ENCODE measurements at regions of chr12 and their contacts with region 1.

Region 1: DNA sequence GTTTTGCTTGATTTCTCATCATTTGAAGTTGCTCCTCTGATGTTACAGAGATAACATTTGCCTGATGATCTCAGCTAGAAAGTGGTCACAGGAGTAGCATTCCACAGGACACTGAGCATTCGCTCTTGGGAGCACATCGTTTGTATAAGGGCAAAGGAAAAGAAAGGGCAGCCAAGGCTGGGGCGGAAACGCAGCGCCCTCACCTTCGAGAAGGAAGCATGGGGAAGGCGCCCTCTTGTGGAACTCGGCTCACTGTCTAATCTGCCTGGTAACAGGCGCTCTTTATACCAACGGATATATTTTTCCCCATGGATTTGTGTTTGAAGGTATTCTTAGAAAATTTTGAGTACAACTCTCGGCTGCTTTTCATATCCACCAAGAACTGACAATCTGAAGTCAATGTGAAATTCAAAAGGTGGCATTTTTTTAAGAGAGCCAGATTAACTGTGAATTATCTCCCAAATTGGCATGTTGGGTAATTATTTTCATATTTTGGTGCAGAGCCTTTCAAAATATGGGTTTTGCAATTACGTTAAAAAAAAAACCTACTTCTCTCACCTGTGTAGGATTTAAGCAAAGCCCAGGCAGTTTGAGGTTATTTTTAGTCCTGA is 172.7 kb downstream of the CAND1 start:
- DNase-seq: peak; percentile 90

Region 2: DNA sequence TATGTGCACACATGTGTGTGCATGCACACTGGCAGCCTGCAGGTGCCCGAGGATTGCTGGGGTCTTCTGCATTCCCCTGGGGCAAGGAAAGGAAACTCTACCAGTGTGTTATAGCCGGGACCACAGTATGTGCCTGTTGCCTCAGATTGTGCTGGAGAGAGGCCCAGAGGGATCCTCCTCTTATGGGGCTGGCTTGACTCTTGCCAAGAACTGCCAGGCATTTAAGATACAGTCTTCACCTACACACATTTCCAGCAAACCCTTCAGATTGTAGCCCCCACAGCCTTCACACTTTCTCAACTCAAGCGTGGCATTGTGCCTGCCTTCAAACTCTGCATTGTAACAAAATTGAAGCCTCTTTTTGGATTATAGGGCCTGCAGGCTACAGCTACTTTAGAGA is 30.0 kb after region 1 on chr12:
- intact Hi-C with region 1: loop called (anchors 1 kb)
- DNase-seq: no peak

Region 3: GRCh38 chr12:67534681-67535080 is 92.8 kb after region 1 on chr12:
- intact Hi-C with region 1: loop called (anchors 5 kb)
- DNase-seq: no peak

Region 4: DNA sequence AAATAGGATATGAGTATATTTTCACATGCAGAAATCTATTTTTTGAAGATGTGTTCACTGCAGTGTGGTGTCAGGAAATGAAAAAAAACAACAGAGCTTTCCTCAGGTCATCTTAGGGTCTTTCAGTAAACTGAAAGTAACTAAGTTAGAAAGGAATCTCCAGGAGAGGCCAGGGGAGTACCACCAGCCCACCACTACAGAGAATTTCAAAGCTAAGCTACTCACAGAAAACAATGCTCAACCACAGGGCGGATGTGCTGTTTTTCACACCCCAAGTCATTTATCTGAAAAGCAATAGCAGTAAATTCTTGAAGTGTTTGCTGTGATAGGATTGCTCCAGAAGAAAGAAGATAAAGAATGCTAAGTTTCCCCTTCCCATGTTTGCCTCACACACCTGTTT is 638.7 kb after region 1 on chr12:
- intact Hi-C with region 1: no loop called
- DNase-seq: no peak

Measured in cardiac septum (tissue), 1 donor.